ENCODE measurements at regions of chr5 and their contacts with region 1.

Region 1: DNA sequence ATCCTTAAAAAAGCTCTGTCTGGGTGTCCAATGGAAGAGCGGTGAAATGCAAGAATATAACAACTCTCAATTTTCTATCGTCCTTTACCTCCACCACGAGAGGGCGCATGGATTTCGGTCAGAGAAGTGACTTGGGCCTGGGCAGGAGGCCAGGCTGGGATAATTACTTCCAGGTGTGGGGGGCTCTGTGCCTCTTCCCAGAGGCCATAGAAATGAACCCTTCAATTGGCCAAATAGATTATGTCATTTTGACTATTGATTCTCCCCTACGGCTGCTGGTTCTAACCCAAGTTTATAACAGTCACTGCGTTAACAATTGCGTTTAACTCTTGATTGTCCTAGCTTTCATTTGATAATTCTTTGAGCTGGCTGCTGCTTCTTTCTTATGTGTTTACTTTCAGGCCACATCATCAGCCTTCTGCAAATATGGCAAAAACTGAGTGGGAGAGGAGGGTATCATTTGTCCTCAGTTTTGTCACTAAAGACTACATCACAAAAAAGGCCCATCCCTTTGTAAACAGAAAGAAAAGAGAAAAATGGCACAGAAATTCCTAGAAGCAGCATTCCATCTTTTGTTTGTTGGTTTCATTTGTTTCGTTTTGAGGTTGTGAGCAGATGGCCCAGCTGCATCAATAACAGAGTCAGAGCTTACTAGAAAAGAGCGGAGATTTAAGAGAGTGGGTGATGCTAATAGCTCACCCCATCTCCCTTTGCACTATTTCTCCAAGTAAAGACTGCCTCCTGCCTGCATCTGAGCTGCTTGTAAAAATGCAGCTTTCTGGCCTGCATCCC is 45.4 kb upstream of the ZFR start:
- DNase-seq: peak; percentile 58 to 67
- H3K4me3 ChIP-seq: no peak overlapping the region
- H3K27ac ChIP-seq: no peak overlapping the region
- H3K4me1 ChIP-seq: no peaks in the 10 kb centered on the region
- H3K27me3 ChIP-seq: no peaks in the 10 kb centered on the region
- CTCF ChIP-seq: peak; percentile 92

Region 2: DNA sequence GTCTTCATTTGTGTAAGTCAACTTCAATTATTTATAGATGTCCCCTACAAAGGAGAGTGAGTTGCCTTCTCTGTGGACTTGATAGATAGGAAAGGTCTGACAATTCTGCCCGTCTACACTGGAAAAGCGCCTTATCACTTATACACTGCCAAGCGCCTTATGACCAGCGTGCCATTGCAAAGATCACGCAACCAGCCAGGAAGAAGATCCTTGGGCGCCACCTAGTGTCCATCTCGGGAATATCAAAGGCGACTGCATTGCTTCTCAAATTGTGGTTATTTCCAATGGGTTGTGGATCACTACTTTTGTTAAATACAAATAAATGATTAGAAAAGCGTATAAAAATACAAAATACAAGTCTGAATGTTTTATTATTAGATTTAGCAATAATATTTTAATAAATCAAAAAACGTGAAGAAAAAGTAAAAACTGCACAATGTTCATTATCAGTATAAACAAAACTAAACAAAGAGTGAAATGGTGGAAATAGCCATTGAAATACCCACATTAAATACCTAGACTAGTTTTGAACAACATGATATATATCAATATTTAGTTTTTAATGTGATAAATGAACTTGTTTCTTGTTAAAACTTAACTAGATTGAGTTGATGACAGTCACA is 123.2 kb after region 1 on chr5:
- CTCF ChIA-PET with region 1: interaction called, 6 read pairs
- POLR2A ChIA-PET with region 1: no interaction called
- intact Hi-C with region 1: loop called (anchors 1 kb)
- DNase-seq: peak; percentile 62 to 86
- H3K4me3 ChIP-seq: no peak overlapping the region
- H3K27ac ChIP-seq: no peak overlapping the region
- H3K4me1 ChIP-seq: no peaks in the 10 kb centered on the region
- H3K27me3 ChIP-seq: no peaks in the 10 kb centered on the region
- CTCF ChIP-seq: peak; percentile 100

Region 3: DNA sequence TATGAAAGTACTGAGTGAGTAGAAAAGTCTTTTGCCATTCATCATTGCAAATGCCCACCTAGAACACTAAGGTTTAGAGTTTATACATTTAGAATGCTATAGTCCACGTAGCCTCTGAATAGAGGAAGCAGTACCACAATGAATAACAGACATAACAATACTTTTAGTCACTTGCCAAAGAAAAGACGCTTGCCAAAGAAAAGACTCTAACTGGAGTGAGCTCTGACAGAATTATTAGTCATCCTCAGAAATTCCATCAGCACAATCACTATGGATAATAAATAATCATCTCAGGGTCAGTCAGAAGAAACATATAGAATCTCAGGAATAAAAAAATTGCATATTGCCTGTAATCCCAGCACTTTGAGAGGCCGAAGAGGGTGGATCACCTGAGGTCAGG is 782.3 kb after region 1 on chr5:
- CTCF ChIA-PET with region 1: interaction called, 12 read pairs
- POLR2A ChIA-PET with region 1: no interaction called
- intact Hi-C with region 1: no loop called
- DNase-seq: peak; percentile 30 to 80
- H3K4me3 ChIP-seq: no peak overlapping the region
- H3K27ac ChIP-seq: peak overlapping the region; percentile 62
- H3K4me1 ChIP-seq: peaks cover 14% of the 10 kb centered on the region; the same call in 1 of the 2 replicates
- H3K27me3 ChIP-seq: no peaks in the 10 kb centered on the region
- CTCF ChIP-seq: no peak

Region 4: DNA sequence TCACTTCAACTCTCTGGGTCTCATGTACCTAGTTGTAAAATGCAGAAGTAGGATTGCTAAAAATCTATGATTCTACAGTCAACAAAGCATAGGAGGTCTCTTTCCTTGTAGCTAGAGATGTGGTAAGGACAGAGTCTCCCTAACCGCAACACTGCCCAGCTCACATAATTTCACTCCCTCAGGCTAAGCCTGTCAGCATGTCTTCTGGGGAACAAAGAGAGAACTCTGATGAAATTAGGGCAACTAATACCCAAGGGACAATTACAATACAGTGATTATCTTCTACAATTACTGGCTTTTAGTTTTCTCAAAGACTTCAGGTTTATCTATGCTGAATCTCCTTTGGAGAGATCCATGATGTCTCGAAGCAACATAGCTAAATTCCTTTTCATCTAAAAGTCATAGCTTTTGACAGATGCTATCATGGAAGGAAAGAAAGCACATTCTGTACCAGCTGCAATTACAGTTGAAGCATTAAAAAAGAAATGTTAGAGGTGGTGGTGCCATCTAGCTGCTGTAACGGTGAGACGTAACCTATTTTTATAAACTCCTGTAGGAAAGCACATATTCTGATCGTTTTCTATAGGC is 809.7 kb after region 1 on chr5:
- CTCF ChIA-PET with region 1: no interaction called
- POLR2A ChIA-PET with region 1: interaction called, 3 read pairs
- intact Hi-C with region 1: loop called (anchors 10 kb)
- DNase-seq: peak in 1 of 2 experiments; percentile 37
- H3K4me3 ChIP-seq: no peak overlapping the region
- H3K27ac ChIP-seq: no peak overlapping the region
- H3K4me1 ChIP-seq: no peaks in the 10 kb centered on the region; the same call in 1 of the 2 replicates
- H3K27me3 ChIP-seq: no peaks in the 10 kb centered on the region
- CTCF ChIP-seq: peak; percentile 77

Region 5: GRCh38 chr5:33423018-33423630 is 933.1 kb after region 1 on chr5:
- CTCF ChIA-PET with region 1: interaction called, 5 read pairs
- POLR2A ChIA-PET with region 1: no interaction called
- intact Hi-C with region 1: loop called (anchors 1 kb)
- DNase-seq: no peak
- H3K4me3 ChIP-seq: no peak overlapping the region
- H3K27ac ChIP-seq: no peak overlapping the region
- H3K4me1 ChIP-seq: no peaks in the 10 kb centered on the region
- H3K27me3 ChIP-seq: no peaks in the 10 kb centered on the region
- CTCF ChIP-seq: peak; percentile 84

Measured in PC-9 (cell line).